Gastrocnemius medialis (tissue), 4 donors: ENCODE measurements at regions of chr4 and their contacts with region 1.

Region 1: DNA sequence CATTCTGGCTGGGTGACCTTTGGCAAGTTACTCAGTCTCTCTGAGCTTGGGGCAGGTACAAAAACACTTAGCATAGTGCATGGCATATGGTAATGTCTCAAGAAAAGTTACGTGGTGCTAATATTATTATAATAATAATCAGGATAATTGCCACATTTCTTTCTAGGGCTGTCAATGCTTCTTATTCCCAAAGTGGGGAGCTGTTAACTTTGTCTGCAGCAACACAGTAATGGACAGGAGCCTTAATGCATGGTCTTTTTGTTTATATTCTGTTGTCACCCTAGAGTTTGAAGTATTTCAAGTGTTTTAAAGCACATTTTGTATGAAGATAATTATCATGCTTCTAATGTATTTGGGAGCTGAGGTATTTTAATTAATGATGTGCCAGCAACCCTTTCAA is 121.8 kb downstream of the FHIP1A start:
- DNase-seq: no peak
- ATAC-seq: no peak
- H3K4me3 ChIP-seq: no peak overlapping the region
- H3K27ac ChIP-seq: peak overlapping the region; percentile 74 to 84 (median 80)
- H3K4me1 ChIP-seq: peaks cover 49 to 52% of the 10 kb centered on the region in 2 donors
- H3K27me3 ChIP-seq: no peaks in the 10 kb centered on the region
- CTCF ChIP-seq: peak in 1 of 5 experiments; percentile 27
- POLR2A ChIP-seq: no peak

Region 2: GRCh38 chr4:151429957-151430570 is 100.7 kb before region 1 on chr4:
- in situ Hi-C with region 1: loop called in 1 of 4 experiments (anchors 10 kb)
- intact Hi-C with region 1: no loop called
- DNase-seq: no peak
- ATAC-seq: no peak
- H3K4me3 ChIP-seq: no peak overlapping the region
- H3K27ac ChIP-seq: peak overlapping the region; percentile 83 to 90 (median 89)
- H3K4me1 ChIP-seq: peaks cover 57 to 69% of the 10 kb centered on the region in 2 donors
- H3K27me3 ChIP-seq: no peaks in the 10 kb centered on the region
- CTCF ChIP-seq: no peak
- POLR2A ChIP-seq: no peak

Region 3: DNA sequence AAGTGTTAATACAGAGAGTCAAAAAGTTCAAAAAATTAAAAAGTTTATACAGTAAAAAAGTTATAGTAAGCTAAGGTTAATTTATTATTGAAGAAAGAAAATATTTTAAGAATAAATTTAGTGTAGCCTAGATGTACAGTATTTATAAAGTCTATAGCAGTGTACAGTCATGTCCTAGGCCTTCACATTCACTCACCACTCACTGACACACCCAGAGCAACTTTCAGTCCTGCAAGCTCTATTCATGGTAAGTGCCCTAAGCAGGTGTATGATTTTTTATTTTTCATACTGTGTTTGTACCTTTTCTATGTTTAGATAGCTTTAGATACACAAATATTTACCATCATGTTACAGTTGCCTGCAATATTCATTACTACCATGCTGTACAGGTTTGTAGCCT is 12.9 kb before region 1 on chr4:
- in situ Hi-C with region 1: no loop called
- intact Hi-C with region 1: no loop called
- DNase-seq: no peak
- ATAC-seq: no peak
- H3K4me3 ChIP-seq: no peak overlapping the region
- H3K27ac ChIP-seq: peak overlapping the region in 2 of 4 donors; percentile 4 to 27
- H3K4me1 ChIP-seq: peaks cover 33 to 35% of the 10 kb centered on the region in 2 donors
- H3K27me3 ChIP-seq: no peaks in the 10 kb centered on the region
- CTCF ChIP-seq: no peak
- POLR2A ChIP-seq: no peak